ENCODE measurements at regions of chr10 and their contacts with region 1.

Region 1: GRCh38 chr10:5710859-5711258 is 26.2 kb downstream of the TASOR2 start:
- DNase-seq: no peak
- H3K4me3 Mint-ChIP-seq: peak overlapping the region; percentile 57
- H3K27ac Mint-ChIP-seq: no peak overlapping the region
- H3K4me1 Mint-ChIP-seq: peaks cover 23% of the 10 kb centered on the region
- H3K27me3 Mint-ChIP-seq: no peaks in the 10 kb centered on the region

Region 2: GRCh38 chr10:5692461-5693358 is 18.1 kb before region 1 on chr10:
- CTCF ChIA-PET with region 1: interaction called, 4 read pairs
- POLR2A ChIA-PET with region 1: interaction called, 10 read pairs
- DNase-seq: peak; percentile 58
- H3K4me3 Mint-ChIP-seq: peak overlapping the region; percentile 68
- H3K27ac Mint-ChIP-seq: peak overlapping the region; percentile 27
- H3K4me1 Mint-ChIP-seq: peaks cover 38% of the 10 kb centered on the region
- H3K27me3 Mint-ChIP-seq: no peaks in the 10 kb centered on the region